Cardiac septum (tissue), 1 donor: ENCODE measurements at regions of chr1 and their contacts with region 1.

Region 1: DNA sequence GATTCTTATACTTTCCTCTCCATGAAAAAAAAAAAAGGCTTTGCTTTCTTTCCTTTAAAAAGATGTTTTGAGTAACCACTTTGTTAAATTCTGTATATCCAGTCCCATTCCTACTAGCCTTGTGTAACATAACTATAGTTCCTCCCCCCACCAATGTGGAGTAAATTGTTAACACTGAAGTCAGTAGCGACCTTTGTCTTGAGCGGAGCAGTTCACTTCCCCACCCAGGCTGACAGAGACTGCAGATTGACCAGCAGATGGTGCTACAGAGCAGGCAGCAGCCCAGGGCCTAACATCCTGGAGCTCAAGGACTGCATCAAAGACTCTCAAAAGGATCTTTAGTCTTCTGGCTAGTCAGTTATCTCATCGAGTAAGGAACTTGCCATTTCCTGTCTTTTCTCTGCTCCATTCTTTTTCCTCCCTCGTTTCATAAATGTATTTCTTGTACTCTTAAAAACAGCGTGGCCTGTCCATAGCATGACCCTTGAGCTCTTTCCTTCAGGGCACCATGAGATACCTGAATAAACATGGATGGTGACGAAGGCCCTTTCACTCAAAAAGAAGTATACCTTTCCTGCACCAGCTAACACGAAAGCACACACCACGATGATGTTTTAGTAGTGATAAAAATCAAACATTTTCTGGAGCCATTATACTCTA is 503.5 kb upstream of the PKN2 start:
- DNase-seq: no peak

Region 2: DNA sequence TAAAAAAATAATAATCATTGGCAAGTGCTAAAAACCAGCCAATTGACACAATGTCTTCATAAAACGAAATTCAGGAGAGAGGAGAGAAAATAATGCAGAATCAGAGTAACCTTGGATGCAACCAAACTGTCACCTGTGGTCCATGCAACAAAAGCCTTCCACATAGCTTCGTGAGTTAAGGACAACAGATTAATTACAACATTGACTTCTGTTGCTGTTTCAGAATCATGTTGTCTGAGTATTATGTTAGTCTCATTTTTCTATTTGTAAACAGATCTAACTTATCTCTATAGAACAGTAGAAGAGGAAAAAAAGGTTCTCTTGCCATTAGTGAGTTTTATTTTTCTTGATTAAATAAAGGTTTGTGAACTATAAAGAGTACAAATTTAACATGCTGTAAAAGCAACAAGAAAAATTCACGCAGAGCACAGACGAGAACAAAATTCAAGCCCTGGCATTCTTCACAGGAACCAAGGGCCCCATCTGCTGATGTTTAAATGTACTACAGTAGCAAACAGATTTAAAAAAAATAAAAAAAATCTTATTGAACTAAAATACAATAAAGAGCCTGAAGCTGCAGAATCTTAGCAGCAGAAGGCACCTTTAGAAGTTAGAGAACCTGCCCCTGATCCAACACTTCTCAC is 122.4 kb after region 1 on chr1:
- intact Hi-C with region 1: loop called (anchors 2 kb)
- DNase-seq: no peak